PC-9 (cell line): ENCODE measurements at regions of chr15 and their contacts with region 1.

Region 1: GRCh38 chr15:40470423-40471104 is at the start of gene CHST14:
- DNase-seq: peak; percentile 58 to 61
- H3K4me3 ChIP-seq: peak within 1 kb of the TSS; percentile 66
- H3K27ac ChIP-seq: peak within 1 kb of the TSS; percentile 31
- H3K4me1 ChIP-seq: peaks cover 17% of the 10 kb centered on the region
- H3K27me3 ChIP-seq: no peaks in the 10 kb centered on the region
- CTCF ChIP-seq: no peak
- total RNA-seq, gene CHST14: 30.6 and 34.3 TPM in 2 replicates

Region 2: DNA sequence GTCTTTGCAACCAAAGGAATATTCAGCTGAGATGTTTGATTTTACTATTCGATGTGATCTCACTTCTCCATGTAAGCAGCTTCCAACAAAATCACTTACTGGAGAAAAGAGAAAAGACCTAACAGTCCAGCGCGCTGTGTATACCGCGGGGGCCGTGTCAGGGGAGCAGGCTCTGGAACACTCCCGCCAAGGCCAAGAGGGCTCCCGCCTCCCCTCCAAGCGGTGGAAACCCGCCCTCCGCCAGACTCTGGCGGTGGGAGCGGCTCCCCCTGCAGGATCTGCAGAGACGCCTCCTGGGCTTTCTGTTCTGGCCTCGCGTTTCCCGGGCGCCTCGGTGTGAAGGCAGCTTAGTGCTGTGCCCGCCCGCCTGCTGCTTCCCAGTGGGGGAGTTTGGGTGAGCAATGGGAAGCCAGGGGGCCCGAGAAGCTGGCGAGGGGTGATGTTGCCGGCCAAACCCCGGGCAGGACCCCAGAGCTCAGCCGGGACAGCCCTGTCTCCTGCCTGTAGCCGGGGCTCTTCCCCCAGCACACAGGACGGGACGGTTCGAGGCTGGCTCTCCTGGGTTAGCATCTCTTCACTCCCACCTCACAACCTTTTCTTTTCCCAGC is 36.5 kb after region 1 on chr15:
- CTCF ChIA-PET with region 1: no interaction called
- POLR2A ChIA-PET with region 1: no interaction called
- intact Hi-C with region 1: loop called (anchors 5 kb)
- DNase-seq: peak; percentile 47 to 69
- H3K4me3 ChIP-seq: no peak overlapping the region; the same call in 1 of the 2 replicates
- H3K27ac ChIP-seq: no peak overlapping the region
- H3K4me1 ChIP-seq: peaks cover 7% of the 10 kb centered on the region
- H3K27me3 ChIP-seq: no peaks in the 10 kb centered on the region
- CTCF ChIP-seq: peak; percentile 51

Region 3: DNA sequence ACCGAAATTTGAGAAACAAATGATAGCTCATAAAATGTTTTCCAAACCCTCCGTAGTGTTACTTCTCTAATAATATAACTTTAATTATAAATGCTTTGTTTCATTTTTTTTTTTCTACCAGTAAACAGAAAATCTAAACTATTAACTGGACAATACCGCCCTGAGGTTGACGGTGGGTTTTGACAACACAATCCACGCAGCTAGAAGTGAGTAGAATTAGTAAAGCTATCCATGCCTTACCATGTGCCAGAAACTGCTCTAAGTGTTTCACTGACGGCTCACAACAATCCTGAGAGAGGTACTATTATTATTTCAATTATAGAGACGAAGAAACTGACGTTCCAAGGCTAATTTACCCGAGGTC is 931.3 kb after region 1 on chr15:
- CTCF ChIA-PET with region 1: interaction called, 11 read pairs
- POLR2A ChIA-PET with region 1: no interaction called
- intact Hi-C with region 1: no loop called
- DNase-seq: no peak
- H3K4me3 ChIP-seq: peak overlapping the region; percentile 95
- H3K27ac ChIP-seq: peak overlapping the region; percentile 50; the same call in 1 of the 2 replicates
- H3K4me1 ChIP-seq: no peaks in the 10 kb centered on the region
- H3K27me3 ChIP-seq: no peaks in the 10 kb centered on the region
- CTCF ChIP-seq: no peak